ENCODE measurements at regions of chr4 and their contacts with region 1.

Region 1: DNA sequence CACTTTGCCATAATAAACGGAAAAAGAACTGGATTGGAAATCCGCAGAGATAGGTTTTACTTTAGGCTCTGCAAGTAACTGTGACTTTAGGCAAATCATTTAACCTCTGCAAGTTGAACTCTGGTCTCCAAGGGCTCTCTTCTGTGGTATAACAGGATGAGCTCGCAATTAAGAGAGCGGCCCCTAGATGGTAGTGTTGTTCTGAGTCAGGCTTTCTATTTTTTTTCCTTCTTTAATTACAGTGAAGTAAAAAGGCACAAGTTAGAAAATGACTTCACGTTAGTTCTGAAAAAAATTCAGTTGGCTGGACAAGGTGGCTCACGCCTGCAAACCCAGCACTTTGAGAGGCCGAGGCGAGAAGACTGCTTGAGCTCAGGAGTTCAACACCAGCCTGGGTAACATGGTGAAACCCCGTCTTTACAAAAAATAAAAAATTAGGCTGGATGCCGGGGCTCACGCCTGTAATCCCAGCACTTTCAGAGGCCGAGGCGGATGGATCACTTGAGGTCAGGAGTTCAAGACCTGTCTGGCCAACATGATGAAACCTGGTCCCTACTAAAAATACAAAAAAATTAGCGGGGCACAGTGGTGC is 18.0 kb downstream of the RPS3A start:
- DNase-seq: peak; percentile 56 to 59
- H3K4me3 ChIP-seq: no peak overlapping the region
- H3K27ac ChIP-seq: no peak overlapping the region
- H3K4me1 ChIP-seq: no peaks in the 10 kb centered on the region
- H3K27me3 ChIP-seq: no peaks in the 10 kb centered on the region
- CTCF ChIP-seq: peak; percentile 77

Region 2: GRCh38 chr4:151099229-151099975 is 18.1 kb before region 1 on chr4 and contains the start of gene RPS3A:
- CTCF ChIA-PET with region 1: no interaction called
- POLR2A ChIA-PET with region 1: no interaction called
- intact Hi-C with region 1: no loop called
- DNase-seq: peak; percentile 91 to 97
- H3K4me3 ChIP-seq: peak within 1 kb of the TSS; percentile 99
- H3K27ac ChIP-seq: peak within 1 kb of the TSS; percentile 91
- H3K4me1 ChIP-seq: peaks cover 9% of the 10 kb centered on the region; the same call in 1 of the 2 replicates
- H3K27me3 ChIP-seq: no peaks in the 10 kb centered on the region
- CTCF ChIP-seq: no peak; the same call in 1 of the 2 replicates
- total RNA-seq, gene RPS3A: 1,663 and 2,345 TPM in 2 replicates

Region 3: GRCh38 chr4:151315212-151315886 is 197.9 kb after region 1 on chr4:
- CTCF ChIA-PET with region 1: no interaction called
- POLR2A ChIA-PET with region 1: interaction called, 10 read pairs
- intact Hi-C with region 1: no loop called
- DNase-seq: peak in 1 of 2 experiments; percentile 83
- H3K4me3 ChIP-seq: no peak overlapping the region; the same call in 1 of the 2 replicates
- H3K27ac ChIP-seq: peak overlapping the region; percentile 56
- H3K4me1 ChIP-seq: peaks cover 46% of the 10 kb centered on the region
- H3K27me3 ChIP-seq: no peaks in the 10 kb centered on the region
- CTCF ChIP-seq: no peak

Region 4: GRCh38 chr4:151614561-151614960 is 497.1 kb after region 1 on chr4:
- CTCF ChIA-PET with region 1: no interaction called
- POLR2A ChIA-PET with region 1: no interaction called
- intact Hi-C with region 1: loop called (anchors 5 kb)
- DNase-seq: no peak
- H3K4me3 ChIP-seq: no peak overlapping the region
- H3K27ac ChIP-seq: no peak overlapping the region
- H3K4me1 ChIP-seq: no peaks in the 10 kb centered on the region
- H3K27me3 ChIP-seq: no peaks in the 10 kb centered on the region
- CTCF ChIP-seq: no peak

Region 5: DNA sequence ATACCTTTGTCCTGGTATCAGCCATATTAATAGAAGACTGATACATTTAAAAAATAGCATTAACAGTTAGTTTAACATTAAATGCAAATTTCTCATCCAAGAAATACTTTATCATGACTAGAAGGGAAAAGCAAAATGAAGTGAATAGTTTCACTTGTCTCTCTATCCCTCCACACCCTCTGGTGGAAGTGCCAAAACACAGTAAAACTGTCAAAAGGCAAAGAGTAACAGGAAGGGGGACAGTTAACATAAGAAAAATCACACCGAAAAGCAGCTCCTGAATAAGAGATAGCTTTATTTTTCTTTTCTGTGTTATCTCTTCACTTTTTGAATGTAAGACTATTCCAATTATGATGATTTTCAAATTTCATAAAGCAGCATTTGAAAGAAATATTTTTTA is 1231.2 kb after region 1 on chr4:
- CTCF ChIA-PET with region 1: no interaction called
- POLR2A ChIA-PET with region 1: interaction called, 29 read pairs
- intact Hi-C with region 1: no loop called
- DNase-seq: no peak
- H3K4me3 ChIP-seq: no peak overlapping the region
- H3K27ac ChIP-seq: no peak overlapping the region
- H3K4me1 ChIP-seq: no peaks in the 10 kb centered on the region
- H3K27me3 ChIP-seq: no peaks in the 10 kb centered on the region
- CTCF ChIP-seq: no peak

Region 6: DNA sequence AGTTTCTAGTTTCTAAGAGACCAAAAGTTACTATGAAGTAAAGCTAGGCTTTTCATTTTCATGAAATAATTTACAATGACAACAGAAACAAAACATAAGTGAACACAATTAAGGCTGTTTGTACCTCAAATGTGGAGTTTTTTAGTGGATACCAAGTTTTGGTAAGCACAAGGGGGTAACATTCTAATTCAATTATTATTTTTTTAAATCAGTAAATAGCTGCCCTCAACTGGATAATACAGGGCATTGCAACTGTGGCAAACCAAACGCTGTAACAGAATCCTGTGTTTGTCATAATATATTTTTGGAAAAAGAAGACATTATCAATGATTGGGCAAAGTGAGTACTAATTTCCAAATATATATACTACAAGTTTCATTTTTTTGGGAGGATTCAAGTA is 1268.1 kb after region 1 on chr4:
- CTCF ChIA-PET with region 1: interaction called, 4 read pairs
- POLR2A ChIA-PET with region 1: no interaction called
- intact Hi-C with region 1: loop called (anchors 10 kb)
- DNase-seq: no peak
- H3K4me3 ChIP-seq: no peak overlapping the region
- H3K27ac ChIP-seq: no peak overlapping the region
- H3K4me1 ChIP-seq: no peaks in the 10 kb centered on the region
- H3K27me3 ChIP-seq: no peaks in the 10 kb centered on the region
- CTCF ChIP-seq: peak; percentile 66; the same call in 1 of the 2 replicates